ENCODE measurements at regions of chr13 and their contacts with region 1.

Region 1: DNA sequence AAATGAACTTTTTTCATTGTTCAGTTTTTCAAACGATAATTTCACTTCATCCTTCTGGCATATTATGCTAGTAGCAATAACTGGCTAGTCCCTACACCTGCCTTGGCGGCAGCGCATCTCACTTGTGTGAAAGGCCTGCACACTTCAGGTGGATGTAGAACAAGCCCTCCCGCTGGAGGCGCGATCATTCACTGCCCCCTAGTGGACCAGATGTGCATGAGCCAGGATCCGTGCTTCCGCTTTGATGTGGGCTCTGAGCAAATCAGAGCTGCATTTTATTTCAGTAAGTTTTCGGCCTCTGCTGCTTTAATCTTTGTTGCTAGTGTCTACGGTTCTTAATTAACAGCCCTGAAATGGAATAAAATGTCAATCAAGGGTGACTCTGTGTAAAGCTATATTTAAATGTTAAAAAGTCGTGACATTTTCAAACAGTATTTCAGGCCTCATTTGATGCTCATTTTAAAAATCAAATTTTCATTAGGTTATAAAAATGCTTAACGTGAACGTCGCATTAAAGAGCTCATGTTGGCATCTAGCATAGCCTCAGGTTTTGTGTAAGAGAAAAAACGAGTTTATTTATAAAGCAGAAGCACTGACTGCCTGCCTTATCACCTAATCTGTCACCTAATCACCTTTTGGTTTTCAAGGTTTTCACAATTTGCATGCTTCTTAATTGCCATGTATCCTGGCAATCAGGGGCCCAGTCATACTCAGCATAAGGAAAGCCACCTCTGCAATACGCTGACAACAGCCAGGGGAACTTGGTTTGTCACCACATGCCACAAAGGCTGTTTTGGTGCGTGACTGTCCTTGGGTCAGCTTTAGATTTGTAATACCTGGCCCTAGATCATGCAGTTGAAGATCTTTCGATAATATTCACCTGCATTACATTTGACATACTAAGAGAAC is 112.2 kb downstream of the TEX26 start:
- DNase-seq: peak; percentile 89
- ATAC-seq: peak; percentile 71
- H3K4me3 Mint-ChIP-seq: no peak overlapping the region
- H3K27ac Mint-ChIP-seq: peak overlapping the region; percentile 87
- H3K4me1 Mint-ChIP-seq: peaks cover 42% of the 10 kb centered on the region
- H3K27me3 Mint-ChIP-seq: peaks cover 17% of the 10 kb centered on the region
- CTCF ChIP-seq: peak; percentile 91

Region 2: DNA sequence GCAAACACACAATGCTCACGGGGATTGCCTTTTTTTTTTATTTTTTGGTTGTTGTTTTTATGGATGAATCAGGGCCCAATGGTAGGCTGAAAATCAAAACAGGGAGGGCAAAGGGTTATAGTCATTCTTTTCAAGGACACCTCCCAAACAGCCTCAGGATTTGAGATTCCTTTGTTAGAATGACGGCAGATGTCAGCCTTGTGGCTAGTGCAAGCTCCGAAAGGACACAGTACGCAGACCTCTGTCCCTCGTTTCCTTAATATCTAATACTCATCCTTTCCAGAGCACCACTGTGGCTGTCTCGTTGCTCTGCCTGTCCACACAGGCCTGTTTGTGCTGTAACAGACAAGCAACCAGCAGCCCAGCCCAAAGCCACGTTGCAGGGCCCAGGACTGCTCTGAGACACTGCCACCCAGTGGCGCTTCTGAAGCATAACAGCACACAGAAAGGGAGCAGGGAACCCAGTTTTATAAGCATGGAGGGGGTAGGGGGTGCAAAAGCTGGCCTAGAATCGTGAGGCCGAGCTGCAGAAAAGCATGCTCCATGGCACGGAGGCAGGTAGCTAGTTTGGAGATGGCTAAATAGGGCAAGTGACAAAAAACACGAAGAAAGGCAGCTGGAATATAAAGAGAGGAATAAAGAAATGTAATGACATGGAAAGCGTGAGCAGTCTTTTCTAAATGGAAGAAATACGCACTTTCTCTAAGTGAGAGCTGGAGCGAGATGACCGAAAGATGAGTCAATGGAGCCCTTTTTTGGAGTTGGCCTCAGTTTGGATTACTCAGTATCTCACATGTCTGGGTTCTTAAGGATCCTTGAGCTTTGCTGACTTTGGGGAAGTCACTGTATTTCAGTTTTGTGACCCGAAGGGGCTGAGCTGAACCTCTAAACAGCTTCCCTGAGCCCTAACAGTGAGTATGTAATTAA is 179.2 kb before region 1 on chr13:
- CTCF ChIA-PET with region 1: interaction called, 24 read pairs
- POLR2A ChIA-PET with region 1: no interaction called
- intact Hi-C with region 1: no loop called
- DNase-seq: peak; percentile 73
- ATAC-seq: peak; percentile 99
- H3K4me3 Mint-ChIP-seq: no peak overlapping the region
- H3K27ac Mint-ChIP-seq: no peak overlapping the region
- H3K4me1 Mint-ChIP-seq: peaks cover 3% of the 10 kb centered on the region
- H3K27me3 Mint-ChIP-seq: peaks cover 11% of the 10 kb centered on the region
- CTCF ChIP-seq: peak; percentile 91

Region 3: DNA sequence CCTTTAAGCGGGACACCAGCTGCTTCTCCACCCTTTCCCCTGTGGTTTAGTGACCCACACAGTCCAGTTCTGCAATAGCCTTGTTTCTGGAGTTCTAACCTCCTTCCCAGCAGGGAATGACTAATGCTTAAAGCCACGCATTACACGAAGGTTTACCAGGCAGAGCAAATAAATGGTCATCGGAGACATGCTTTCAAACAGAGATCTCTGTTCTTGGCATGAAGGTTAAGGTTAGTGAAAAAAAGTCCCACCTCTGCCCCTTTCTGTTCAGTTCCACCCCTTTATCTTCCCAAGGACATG is 163.8 kb before region 1 on chr13:
- CTCF ChIA-PET with region 1: no interaction called
- POLR2A ChIA-PET with region 1: no interaction called
- intact Hi-C with region 1: no loop called
- DNase-seq: no peak
- ATAC-seq: no peak
- H3K4me3 Mint-ChIP-seq: no peak overlapping the region
- H3K27ac Mint-ChIP-seq: no peak overlapping the region
- H3K4me1 Mint-ChIP-seq: peaks cover 15% of the 10 kb centered on the region
- H3K27me3 Mint-ChIP-seq: peaks cover 21% of the 10 kb centered on the region
- CTCF ChIP-seq: no peak

Region 4: DNA sequence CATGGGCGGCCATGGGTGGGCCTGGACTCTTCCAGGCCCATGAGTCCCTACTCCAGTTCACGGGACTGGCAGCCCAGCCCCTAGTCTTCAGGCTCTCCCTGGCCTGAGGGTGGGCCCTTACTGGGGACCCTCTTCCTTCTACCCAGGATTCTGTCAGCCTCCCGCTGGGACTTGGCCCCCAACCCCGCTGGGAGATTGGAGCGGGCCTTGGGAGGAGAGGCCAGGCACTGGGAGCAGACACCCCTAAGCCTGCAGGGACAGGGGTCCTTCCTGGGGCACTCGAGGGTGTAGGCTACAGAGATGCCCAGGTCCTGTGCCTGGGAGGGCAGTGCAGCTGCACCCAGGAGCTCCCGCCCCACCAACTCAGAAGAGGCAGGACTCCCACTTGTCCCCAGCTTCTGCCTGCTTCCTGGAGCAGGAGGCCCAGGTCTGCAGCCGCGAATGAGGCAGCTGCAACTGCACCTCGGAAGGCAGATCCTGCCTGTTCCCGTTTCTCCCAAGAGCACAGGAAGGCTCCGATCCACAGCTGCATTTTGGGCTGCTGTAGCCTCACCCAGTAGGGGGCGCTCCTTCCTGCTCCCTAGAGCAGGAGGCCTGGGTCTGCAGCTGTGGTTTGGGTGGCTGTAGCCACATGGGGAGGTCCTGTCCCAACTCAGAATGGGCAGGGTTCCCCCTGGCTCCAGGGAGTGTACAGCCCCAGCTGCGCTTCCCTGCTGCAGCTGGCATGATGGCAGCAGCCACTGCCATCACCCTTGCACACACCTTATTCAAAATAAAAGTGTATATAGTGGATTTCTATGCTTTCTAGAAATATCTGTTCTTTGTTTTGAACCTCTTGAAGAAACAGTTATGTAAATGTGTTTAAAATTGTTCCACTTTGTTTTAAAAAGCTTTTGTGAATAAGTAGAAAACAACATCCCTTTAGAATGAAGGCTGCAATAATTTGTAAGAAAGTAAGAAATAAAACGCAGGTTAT is 65.4 kb before region 1 on chr13:
- CTCF ChIA-PET with region 1: interaction called, 19 read pairs
- POLR2A ChIA-PET with region 1: no interaction called
- intact Hi-C with region 1: loop called (anchors 5 kb)
- DNase-seq: peak; percentile 61
- ATAC-seq: no peak
- H3K4me3 Mint-ChIP-seq: no peak overlapping the region
- H3K27ac Mint-ChIP-seq: no peak overlapping the region
- H3K4me1 Mint-ChIP-seq: no peaks in the 10 kb centered on the region
- H3K27me3 Mint-ChIP-seq: peaks cover 10% of the 10 kb centered on the region
- CTCF ChIP-seq: peak; percentile 86

Region 5: DNA sequence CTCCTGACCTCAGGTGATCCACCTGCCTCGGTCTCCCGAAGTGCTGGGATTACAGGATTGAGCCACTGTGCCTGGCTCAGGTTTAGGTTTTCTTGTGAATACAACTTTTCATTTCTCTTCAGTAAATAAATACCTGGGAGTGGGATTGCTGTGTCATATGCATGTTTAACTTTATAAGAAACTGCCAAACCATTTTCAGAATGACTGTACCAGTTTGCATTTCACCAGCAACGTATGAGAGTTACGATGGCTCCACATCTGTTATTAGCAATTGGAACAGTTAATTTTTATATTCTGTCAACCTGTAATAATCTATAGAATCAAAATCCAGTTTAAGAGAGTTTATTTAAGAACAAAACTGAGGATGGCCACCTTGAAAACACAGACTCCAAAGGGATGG is 60.0 kb before region 1 on chr13:
- CTCF ChIA-PET with region 1: interaction called, 19 read pairs
- POLR2A ChIA-PET with region 1: no interaction called
- intact Hi-C with region 1: loop called (anchors 5 kb)
- DNase-seq: no peak
- ATAC-seq: no peak
- H3K4me3 Mint-ChIP-seq: no peak overlapping the region
- H3K27ac Mint-ChIP-seq: no peak overlapping the region
- H3K4me1 Mint-ChIP-seq: no peaks in the 10 kb centered on the region
- H3K27me3 Mint-ChIP-seq: peaks cover 10% of the 10 kb centered on the region
- CTCF ChIP-seq: no peak

Region 6: GRCh38 chr13:31029102-31029501 is 15.5 kb before region 1 on chr13:
- CTCF ChIA-PET with region 1: interaction called, 15 read pairs
- POLR2A ChIA-PET with region 1: no interaction called
- intact Hi-C with region 1: no loop called
- DNase-seq: no peak
- ATAC-seq: no peak
- H3K4me3 Mint-ChIP-seq: no peak overlapping the region
- H3K27ac Mint-ChIP-seq: no peak overlapping the region
- H3K4me1 Mint-ChIP-seq: no peaks in the 10 kb centered on the region
- H3K27me3 Mint-ChIP-seq: peaks cover 4% of the 10 kb centered on the region
- CTCF ChIP-seq: no peak

Region 7: DNA sequence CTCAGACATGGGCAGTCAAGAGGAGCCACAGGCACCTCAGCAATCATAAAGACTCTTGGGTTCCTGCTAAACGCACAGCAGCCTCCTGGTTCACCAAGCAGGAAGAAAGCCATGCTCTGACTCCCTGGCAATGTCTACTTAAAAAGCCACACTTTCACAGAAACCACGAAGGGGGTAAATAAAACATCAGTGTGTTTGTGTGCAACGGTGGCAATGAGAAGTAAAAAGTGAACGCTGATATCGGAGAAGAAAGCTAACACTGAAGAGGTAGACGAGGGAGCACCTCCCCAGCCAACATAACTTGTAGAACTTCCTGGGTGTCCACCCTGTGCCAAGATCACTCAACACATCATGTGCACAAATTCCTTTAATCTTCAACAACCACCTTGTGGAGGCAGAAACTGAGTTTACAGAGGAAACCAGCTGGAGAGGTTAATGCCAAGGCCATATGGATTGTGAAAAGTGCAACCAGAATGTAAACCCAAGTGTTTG is 86.9 kb after region 1 on chr13:
- CTCF ChIA-PET with region 1: interaction called, 4 read pairs
- POLR2A ChIA-PET with region 1: no interaction called
- intact Hi-C with region 1: loop called (anchors 5 kb)
- DNase-seq: no peak
- ATAC-seq: no peak
- H3K4me3 Mint-ChIP-seq: no peak overlapping the region
- H3K27ac Mint-ChIP-seq: no peak overlapping the region
- H3K4me1 Mint-ChIP-seq: peaks cover 42% of the 10 kb centered on the region
- H3K27me3 Mint-ChIP-seq: peaks cover 19% of the 10 kb centered on the region
- CTCF ChIP-seq: no peak

Measured in activated CD8-positive, alpha-beta T cell treated with anti-CD3 and anti-CD28 coated beads for 36 hours (primary cell).